ENCODE measurements at regions of chr2 and their contacts with region 1.

Region 1: GRCh38 chr2:201357241-201357640 is at the start of gene FLACC1:
- DNase-seq: peak in 3 of 14 experiments; percentile 9 to 30 (median 18)
- ATAC-seq: no peak
- H3K4me3 ChIP-seq: no peak within 1 kb of the TSS
- H3K4me3 Mint-ChIP-seq: no peak within 1 kb of the TSS
- H3K27ac ChIP-seq: no peak within 1 kb of the TSS
- H3K27ac Mint-ChIP-seq: no peak within 1 kb of the TSS
- H3K4me1 ChIP-seq: peaks cover under 1% of the 10 kb centered on the region
- H3K4me1 Mint-ChIP-seq: peaks cover 20% of the 10 kb centered on the region
- H3K27me3 ChIP-seq: no peaks in the 10 kb centered on the region
- H3K27me3 Mint-ChIP-seq: no peaks in the 10 kb centered on the region
- CTCF ChIP-seq: no peak
- total RNA-seq, gene FLACC1: 4.5 to 4.8 TPM

Region 2: GRCh38 chr2:200944467-200945394 is 412.5 kb before region 1 on chr2:
- CTCF ChIA-PET with region 1: no interaction called
- POLR2A ChIA-PET with region 1: no interaction called
- intact Hi-C with region 1: no loop called
- DNase-seq: peak in 2 of 14 experiments; percentile 3 to 43
- ATAC-seq: no peak
- H3K4me3 ChIP-seq: no peak overlapping the region
- H3K4me3 Mint-ChIP-seq: no peak overlapping the region
- H3K27ac ChIP-seq: no peak overlapping the region
- H3K27ac Mint-ChIP-seq: no peak overlapping the region
- H3K4me1 ChIP-seq: no peaks in the 10 kb centered on the region
- H3K4me1 Mint-ChIP-seq: peaks cover 3% of the 10 kb centered on the region
- H3K27me3 ChIP-seq: no peaks in the 10 kb centered on the region
- H3K27me3 Mint-ChIP-seq: no peaks in the 10 kb centered on the region
- CTCF ChIP-seq: no peak

Region 3: DNA sequence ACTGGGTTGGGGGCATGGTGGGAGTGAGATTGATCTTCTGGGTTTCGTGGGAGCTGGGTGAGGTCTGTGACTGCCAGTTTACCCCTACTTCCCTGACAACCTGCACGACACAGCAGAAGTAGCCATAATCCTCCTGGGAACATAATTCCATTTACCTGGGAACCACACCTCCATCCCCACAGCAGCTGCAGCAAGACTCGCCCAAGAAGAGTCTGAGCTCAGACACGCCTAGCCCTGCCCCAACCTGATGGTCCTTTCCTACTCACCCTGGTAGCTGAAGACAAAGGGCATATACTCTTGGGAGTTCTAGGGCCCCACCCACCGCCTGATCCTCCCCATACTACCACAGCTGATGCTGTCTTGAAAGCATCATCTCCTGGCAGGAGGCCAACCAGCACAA is 43.9 kb before region 1 on chr2:
- CTCF ChIA-PET with region 1: no interaction called
- POLR2A ChIA-PET with region 1: no interaction called
- intact Hi-C with region 1: loop called in 1 of 2 experiments (anchors 5 kb)
- DNase-seq: no peak
- ATAC-seq: no peak
- H3K4me3 ChIP-seq: no peak overlapping the region
- H3K4me3 Mint-ChIP-seq: no peak overlapping the region
- H3K27ac ChIP-seq: no peak overlapping the region
- H3K27ac Mint-ChIP-seq: no peak overlapping the region
- H3K4me1 ChIP-seq: no peaks in the 10 kb centered on the region
- H3K4me1 Mint-ChIP-seq: no peaks in the 10 kb centered on the region
- H3K27me3 ChIP-seq: no peaks in the 10 kb centered on the region
- H3K27me3 Mint-ChIP-seq: no peaks in the 10 kb centered on the region
- CTCF ChIP-seq: no peak

Region 4: GRCh38 chr2:201383156-201383555 is 25.9 kb after region 1 on chr2:
- CTCF ChIA-PET with region 1: no interaction called
- POLR2A ChIA-PET with region 1: no interaction called
- intact Hi-C with region 1: no loop called
- DNase-seq: no peak
- ATAC-seq: no peak
- H3K4me3 ChIP-seq: no peak overlapping the region
- H3K4me3 Mint-ChIP-seq: no peak overlapping the region
- H3K27ac ChIP-seq: no peak overlapping the region
- H3K27ac Mint-ChIP-seq: no peak overlapping the region
- H3K4me1 ChIP-seq: no peaks in the 10 kb centered on the region
- H3K4me1 Mint-ChIP-seq: no peaks in the 10 kb centered on the region
- H3K27me3 ChIP-seq: no peaks in the 10 kb centered on the region
- H3K27me3 Mint-ChIP-seq: no peaks in the 10 kb centered on the region
- CTCF ChIP-seq: no peak

Measured in CD4-positive, alpha-beta T cell (primary cell).